OCI-LY7 (cell line): ENCODE measurements at regions of chr6 and their contacts with region 1.

Region 1: DNA sequence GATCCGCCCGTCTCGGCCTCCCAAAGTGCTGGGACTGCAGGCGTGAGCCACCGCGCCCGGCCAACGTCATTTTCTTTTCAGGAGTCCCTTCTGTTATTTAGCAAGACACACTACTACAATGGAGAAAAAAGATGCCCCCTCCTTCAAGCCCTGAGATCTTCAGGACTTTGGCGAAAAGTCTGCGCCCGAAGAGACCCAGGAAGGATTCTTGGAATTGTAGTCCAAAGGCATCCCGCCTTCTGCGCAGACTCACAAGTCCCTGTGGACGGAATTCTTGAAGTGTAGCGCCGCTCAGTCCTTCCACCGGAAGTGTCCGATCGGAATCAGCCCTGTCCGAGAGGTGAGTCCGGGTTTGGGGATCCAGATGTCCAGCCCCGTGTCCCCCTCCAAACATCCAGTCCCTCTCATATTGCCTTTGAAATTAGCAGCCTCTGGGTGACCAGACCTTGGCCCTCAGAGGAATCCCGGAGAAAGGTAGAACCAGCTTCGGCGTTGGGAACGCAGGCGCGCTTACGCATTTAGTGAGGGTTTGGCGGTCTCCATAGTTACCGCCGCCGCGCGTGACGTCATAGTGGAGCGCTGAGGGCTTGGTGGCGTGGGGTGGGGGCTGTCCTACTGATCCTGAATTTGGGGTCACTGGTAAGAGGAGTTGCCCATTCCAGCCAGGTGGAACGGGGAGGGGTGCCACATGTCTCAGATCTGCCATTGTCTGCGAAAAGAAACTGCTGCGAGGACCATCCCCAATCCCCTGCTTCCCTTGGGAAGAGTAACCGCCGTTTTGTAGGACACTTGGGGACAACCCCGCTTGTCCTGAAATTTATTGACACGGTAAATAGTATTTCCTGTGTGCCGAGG is 490 bp downstream of the ZNF165 start:
- DNase-seq: peak; percentile 95
- H3K4me3 ChIP-seq: peak overlapping the region; percentile 87
- H3K27ac ChIP-seq: peak overlapping the region; percentile 70
- H3K4me1 ChIP-seq: peaks cover 12% of the 10 kb centered on the region
- CTCF ChIP-seq: no peak

Region 2: DNA sequence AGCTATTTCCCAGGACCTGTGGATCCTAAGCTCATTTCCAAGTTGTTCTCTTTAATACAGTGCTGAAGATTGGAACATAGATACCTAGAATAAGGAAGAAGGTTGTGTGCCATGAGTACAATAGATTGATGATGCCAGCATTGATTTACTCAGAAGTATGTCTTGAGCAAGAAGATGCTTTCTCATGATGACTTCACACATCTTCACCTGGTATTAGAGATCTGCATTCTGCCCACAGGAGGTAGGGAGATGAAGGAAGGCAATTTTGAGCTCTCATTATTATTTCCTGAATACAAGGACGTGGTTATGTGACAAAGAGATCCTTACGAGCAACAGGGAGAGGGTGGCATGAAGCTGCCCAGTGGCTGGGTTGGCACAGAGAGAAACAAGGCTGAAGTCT is 20.5 kb before region 1 on chr6:
- CTCF ChIA-PET with region 1: no interaction called
- POLR2A ChIA-PET with region 1: no interaction called
- intact Hi-C with region 1: no loop called
- DNase-seq: no peak
- H3K4me3 ChIP-seq: no peak overlapping the region
- H3K27ac ChIP-seq: no peak overlapping the region
- H3K4me1 ChIP-seq: no peaks in the 10 kb centered on the region
- CTCF ChIP-seq: no peak

Region 3: GRCh38 chr6:28104392-28105244 is 23.8 kb after region 1 on chr6:
- CTCF ChIA-PET with region 1: no interaction called
- POLR2A ChIA-PET with region 1: interaction called, 4 read pairs
- intact Hi-C with region 1: loop called (anchors 1 kb)
- DNase-seq: peak; percentile 90
- H3K4me3 ChIP-seq: peak overlapping the region; percentile 71
- H3K27ac ChIP-seq: peak overlapping the region; percentile 44
- H3K4me1 ChIP-seq: peaks cover 23% of the 10 kb centered on the region
- CTCF ChIP-seq: peak; percentile 68

Region 4: GRCh38 chr6:28648035-28648877 is 567.4 kb after region 1 on chr6:
- CTCF ChIA-PET with region 1: no interaction called
- POLR2A ChIA-PET with region 1: no interaction called
- intact Hi-C with region 1: loop called (anchors 2 kb)
- DNase-seq: peak; percentile 89
- H3K4me3 ChIP-seq: peak overlapping the region; percentile 96
- H3K27ac ChIP-seq: peak overlapping the region; percentile 85
- H3K4me1 ChIP-seq: peaks cover 9% of the 10 kb centered on the region
- CTCF ChIP-seq: no peak